ENCODE measurements at regions of chr3 and their contacts with region 1.

Region 1: GRCh38 chr3:134852893-134853351 is 57.9 kb downstream of the EPHB1 start:
- DNase-seq: peak; percentile 91
- ATAC-seq: peak; percentile 96
- H3K4me3 ChIP-seq: no peak overlapping the region
- H3K27ac ChIP-seq: peak overlapping the region; percentile 68
- H3K4me1 ChIP-seq: peaks cover 36% of the 10 kb centered on the region
- H3K27me3 ChIP-seq: no peaks in the 10 kb centered on the region
- CTCF ChIP-seq: peak in 2 of 3 experiments; percentile 25 to 32; a peak in 2 of 6 replicates
- EP300 ChIP-seq: peak; percentile 56 to 69; a peak in 2 of 4 replicates
- POLR2A ChIP-seq: peak; percentile 56; the same call in 1 of the 2 replicates
- RAD21 ChIP-seq: peak; percentile 39

Region 2: GRCh38 chr3:134809427-134810051 is 43.4 kb before region 1 on chr3:
- CTCF ChIA-PET with region 1: interaction called, 9 read pairs
- POLR2A ChIA-PET with region 1: interaction called, 3 read pairs
- RAD21 ChIA-PET with region 1: interaction called, 20 read pairs
- SMC1A ChIA-PET with region 1: interaction called, 6 read pairs
- in situ Hi-C with region 1: no loop called
- intact Hi-C with region 1: no loop called
- DNase-seq: no peak
- ATAC-seq: peak; percentile 37
- H3K4me3 ChIP-seq: no peak overlapping the region
- H3K27ac ChIP-seq: no peak overlapping the region
- H3K4me1 ChIP-seq: peaks cover 15% of the 10 kb centered on the region
- H3K27me3 ChIP-seq: no peaks in the 10 kb centered on the region
- CTCF ChIP-seq: no peak
- EP300 ChIP-seq: no peak
- POLR2A ChIP-seq: no peak
- RAD21 ChIP-seq: no peak

Region 3: DNA sequence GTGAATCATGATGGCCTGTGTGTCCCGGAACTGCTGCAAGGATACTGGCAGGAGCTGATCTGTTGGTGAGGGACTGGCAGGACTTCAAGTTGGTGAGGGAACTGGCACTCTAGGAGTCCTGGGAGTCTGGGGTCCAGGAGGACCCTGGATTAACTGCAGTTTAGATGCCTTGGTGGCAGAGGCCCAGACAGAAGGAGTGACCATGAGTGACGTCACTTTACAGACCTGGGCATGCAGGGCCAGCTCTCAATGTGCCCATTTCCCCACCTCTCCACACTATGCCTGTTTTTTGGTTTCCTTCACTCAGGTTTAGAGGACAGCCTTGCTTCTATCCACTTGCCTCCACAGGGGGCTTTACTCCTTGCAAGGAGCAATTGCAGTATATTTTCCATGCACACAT is 96.2 kb after region 1 on chr3:
- CTCF ChIA-PET with region 1: no interaction called
- POLR2A ChIA-PET with region 1: no interaction called
- RAD21 ChIA-PET with region 1: no interaction called
- SMC1A ChIA-PET with region 1: no interaction called
- in situ Hi-C with region 1: no loop called
- intact Hi-C with region 1: no loop called
- DNase-seq: no peak
- ATAC-seq: no peak
- H3K4me3 ChIP-seq: no peak overlapping the region
- H3K27ac ChIP-seq: no peak overlapping the region
- H3K4me1 ChIP-seq: no peaks in the 10 kb centered on the region
- H3K27me3 ChIP-seq: no peaks in the 10 kb centered on the region
- CTCF ChIP-seq: no peak
- EP300 ChIP-seq: no peak
- POLR2A ChIP-seq: no peak
- RAD21 ChIP-seq: no peak